Cardiac septum (tissue), 1 donor: ENCODE measurements at regions of chr6 and their contacts with region 1.

Region 1: GRCh38 chr6:29976588-29977424 is 34.5 kb downstream of the HLA-A start:
- DNase-seq: peak; percentile 94

Region 2: GRCh38 chr6:29917857-29918256 is 58.9 kb before region 1 on chr6:
- intact Hi-C with region 1: no loop called
- DNase-seq: no peak

Region 3: GRCh38 chr6:29942275-29943052 is 34.3 kb before region 1 on chr6 and contains the start of gene HLA-A:
- intact Hi-C with region 1: loop called (anchors 2 kb)
- DNase-seq: peak; percentile 96
- total RNA-seq, gene HLA-A: 268 TPM